Activated naive CD4-positive, alpha-beta T cell treated with anti-CD3 and anti-CD28 coated beads for 36 hours (primary cell): ENCODE measurements at regions of chr9 and their contacts with region 1.

Region 1: DNA sequence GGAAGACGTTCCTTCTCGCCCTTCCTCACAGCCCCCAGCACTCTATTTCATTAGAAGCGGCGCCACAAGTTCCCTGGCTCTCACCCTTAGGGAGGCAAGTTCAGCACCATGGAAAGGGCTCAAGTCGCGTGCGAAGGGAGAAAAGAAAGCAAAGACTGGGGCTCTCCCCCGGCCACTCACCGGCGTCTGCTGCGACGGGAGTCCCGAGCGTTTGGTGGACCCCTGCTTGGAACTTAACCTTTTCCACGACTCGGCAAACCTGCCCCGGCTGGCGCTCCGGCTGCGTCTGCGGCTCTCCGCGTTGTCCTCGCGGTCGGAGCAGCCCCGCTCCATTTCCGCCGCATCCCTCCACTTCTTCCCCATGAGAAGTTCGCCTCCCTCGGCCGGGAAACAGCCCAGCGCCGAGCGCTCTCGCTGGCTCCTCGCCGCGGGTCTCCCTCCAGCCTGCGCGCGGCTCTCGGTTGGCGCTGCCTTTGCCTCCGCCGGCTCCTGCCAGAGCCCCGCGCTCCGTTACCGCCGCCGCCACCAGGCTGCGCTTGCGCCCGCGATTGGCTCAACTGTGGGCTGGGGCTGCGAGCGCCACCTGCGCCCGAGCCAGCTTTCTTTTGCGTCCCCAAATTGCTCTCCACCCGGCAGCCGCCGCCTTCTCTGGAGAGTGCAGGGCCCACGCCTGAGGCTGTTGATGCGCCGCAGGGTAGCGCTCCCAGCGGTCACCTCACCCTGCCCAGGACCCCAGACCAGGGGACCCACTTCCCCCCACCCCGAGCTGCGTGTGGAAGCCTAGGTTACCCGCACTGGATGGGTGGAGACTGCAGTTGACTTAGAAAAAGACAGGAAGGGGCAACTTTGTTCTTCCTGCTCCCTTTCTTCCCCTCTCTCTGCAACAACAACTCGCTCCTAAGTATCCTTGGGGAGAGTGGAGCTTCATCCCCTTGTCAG is 321.6 kb downstream of the CEMIP2 start:
- DNase-seq: peak; percentile 78
- H3K4me3 Mint-ChIP-seq: peak overlapping the region; percentile 55
- H3K27ac Mint-ChIP-seq: no peak overlapping the region
- H3K4me1 Mint-ChIP-seq: peaks cover 3% of the 10 kb centered on the region
- H3K27me3 Mint-ChIP-seq: peaks cover 37% of the 10 kb centered on the region

Region 2: GRCh38 chr9:71431931-71432330 is 14.8 kb before region 1 on chr9:
- CTCF ChIA-PET with region 1: no interaction called
- intact Hi-C with region 1: no loop called
- DNase-seq: no peak
- H3K4me3 Mint-ChIP-seq: no peak overlapping the region
- H3K27ac Mint-ChIP-seq: no peak overlapping the region
- H3K4me1 Mint-ChIP-seq: no peaks in the 10 kb centered on the region
- H3K27me3 Mint-ChIP-seq: peaks cover 6% of the 10 kb centered on the region

Region 3: GRCh38 chr9:71652529-71652928 is 205.8 kb after region 1 on chr9:
- CTCF ChIA-PET with region 1: no interaction called
- intact Hi-C with region 1: loop called (anchors 5 kb)
- DNase-seq: no peak
- H3K4me3 Mint-ChIP-seq: no peak overlapping the region
- H3K27ac Mint-ChIP-seq: no peak overlapping the region
- H3K4me1 Mint-ChIP-seq: peaks cover 2% of the 10 kb centered on the region
- H3K27me3 Mint-ChIP-seq: peaks cover 5% of the 10 kb centered on the region